ENCODE measurements at regions of chr7 and their contacts with region 1.

Region 1: DNA sequence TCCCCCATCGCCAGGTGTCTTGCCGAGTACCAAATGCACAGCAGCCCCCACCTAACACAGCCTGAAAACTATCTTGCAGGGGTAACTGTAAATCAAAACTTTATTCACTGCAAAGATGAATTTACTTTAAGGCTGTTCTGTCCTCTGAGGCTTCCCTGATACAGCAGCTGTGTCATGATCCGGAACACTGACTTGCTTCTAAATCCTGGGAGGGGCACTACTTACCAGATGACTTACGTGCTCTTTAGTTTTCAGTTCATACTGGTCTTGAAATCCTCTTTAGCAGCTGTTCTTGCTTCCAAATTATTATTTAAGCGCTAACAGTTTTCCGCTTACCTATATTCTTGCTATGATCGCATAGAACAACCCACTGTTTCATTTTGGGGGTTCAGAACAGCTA is 4.9 kb downstream of the DYNC1I1 start:
- DNase-seq: no peak
- ATAC-seq: peak; percentile 35

Region 2: DNA sequence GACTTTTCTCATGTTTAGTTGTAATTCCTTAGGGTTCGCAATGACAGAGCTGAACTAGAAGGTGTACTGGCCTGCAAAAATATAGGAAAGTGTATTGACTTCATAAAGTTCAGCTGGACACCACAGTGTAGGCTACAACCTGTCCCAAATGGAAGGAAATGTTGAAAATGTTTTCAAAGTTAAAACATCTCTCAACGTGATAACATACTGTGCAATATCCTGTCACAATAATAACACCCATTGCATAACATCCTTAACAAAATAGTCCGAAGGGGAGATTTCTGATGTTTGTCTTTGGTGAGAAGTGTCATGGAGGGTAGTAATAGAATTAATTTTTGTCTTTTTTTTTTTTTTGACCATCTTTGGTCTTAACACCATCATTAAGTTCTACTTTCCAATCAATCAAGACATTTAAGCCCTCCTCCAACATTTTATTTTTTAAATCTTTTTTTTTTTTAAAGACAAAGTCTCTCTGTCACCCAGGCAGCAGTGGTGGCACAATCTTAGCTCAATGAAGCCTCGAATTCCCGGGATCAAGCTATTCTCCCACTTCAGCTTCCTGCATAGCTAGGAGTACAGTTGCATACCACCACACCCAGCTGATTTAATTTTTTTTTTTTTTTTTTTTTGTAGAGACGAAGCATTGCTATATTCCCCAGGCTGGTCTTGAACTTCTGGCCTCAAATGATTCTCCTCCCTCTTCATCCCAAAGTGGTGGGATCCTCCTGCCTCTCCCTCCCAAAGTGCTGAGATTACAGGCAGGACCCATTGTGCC is 40.8 kb after region 1 on chr7:
- intact Hi-C with region 1: loop called (anchors 1 kb)
- DNase-seq: no peak
- ATAC-seq: no peak

Measured in sciatic nerve (tissue), 2 donors.